ENCODE measurements at regions of chr6 and their contacts with region 1.

Region 1: GRCh38 chr6:56595490-56596122 is 47.1 kb downstream of the DST start:
- DNase-seq: peak; percentile 24
- ATAC-seq: peak; percentile 83; the same call in 1 of the 2 replicates
- H3K4me3 Mint-ChIP-seq: no peak overlapping the region
- H3K27ac Mint-ChIP-seq: peak overlapping the region; percentile 24
- H3K4me1 Mint-ChIP-seq: no peaks in the 10 kb centered on the region
- H3K27me3 Mint-ChIP-seq: no peaks in the 10 kb centered on the region
- CTCF ChIP-seq: peak; percentile 47

Region 2: DNA sequence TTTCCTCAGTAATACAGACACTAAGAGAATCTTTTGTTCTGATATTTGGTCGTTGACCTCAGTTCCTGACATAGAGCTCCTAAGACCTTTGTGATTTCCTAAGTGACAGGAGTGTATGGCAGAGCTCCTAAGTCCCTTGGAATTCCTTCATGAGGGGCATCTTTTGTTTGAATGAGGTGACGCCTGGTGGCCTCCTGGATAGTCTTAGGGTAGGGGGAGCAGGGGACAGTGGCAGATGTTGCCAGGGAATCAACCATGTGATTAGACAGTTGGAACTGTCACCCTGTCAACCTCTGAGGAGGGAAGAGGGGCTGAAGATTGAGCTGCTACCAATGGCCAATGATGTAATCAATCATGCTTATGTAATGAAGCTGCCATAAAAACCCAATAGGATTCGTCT is 19.9 kb before region 1 on chr6:
- CTCF ChIA-PET with region 1: interaction called, 15 read pairs
- POLR2A ChIA-PET with region 1: no interaction called
- DNase-seq: no peak
- ATAC-seq: no peak
- H3K4me3 Mint-ChIP-seq: no peak overlapping the region
- H3K27ac Mint-ChIP-seq: no peak overlapping the region
- H3K4me1 Mint-ChIP-seq: no peaks in the 10 kb centered on the region
- H3K27me3 Mint-ChIP-seq: no peaks in the 10 kb centered on the region
- CTCF ChIP-seq: no peak

Region 3: GRCh38 chr6:56613247-56613851 is 17.7 kb after region 1 on chr6:
- CTCF ChIA-PET with region 1: interaction called, 13 read pairs
- POLR2A ChIA-PET with region 1: no interaction called
- DNase-seq: no peak
- ATAC-seq: 0 out of 2 replicates have a peak, but pooled peaks have one; percentile 17
- H3K4me3 Mint-ChIP-seq: no peak overlapping the region
- H3K27ac Mint-ChIP-seq: no peak overlapping the region
- H3K4me1 Mint-ChIP-seq: peaks cover 26% of the 10 kb centered on the region
- H3K27me3 Mint-ChIP-seq: no peaks in the 10 kb centered on the region
- CTCF ChIP-seq: no peak

Region 4: DNA sequence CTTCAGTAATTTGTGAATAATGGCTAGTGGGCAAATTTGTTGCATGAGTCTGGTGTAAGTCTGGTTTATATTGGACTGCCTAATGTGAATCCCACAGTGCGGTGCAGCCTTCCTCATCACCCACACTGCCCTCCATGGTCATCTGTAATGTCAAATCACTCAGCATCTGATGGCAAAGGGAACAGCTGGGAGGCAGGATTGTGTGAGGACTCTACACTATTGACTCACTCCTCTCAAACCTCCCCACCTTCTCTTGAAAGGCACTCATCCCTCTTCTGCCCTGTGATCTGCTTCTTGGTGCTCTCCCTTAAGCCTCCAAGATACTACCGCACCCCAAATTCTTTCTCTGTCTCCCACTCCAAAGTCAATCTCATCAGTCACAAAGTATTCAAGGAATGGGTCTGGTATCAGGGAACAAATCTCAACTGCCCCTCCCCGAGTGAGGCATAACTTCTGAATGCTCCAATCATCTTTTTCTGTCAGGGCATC is 213.3 kb after region 1 on chr6:
- CTCF ChIA-PET with region 1: no interaction called
- POLR2A ChIA-PET with region 1: no interaction called
- DNase-seq: no peak
- ATAC-seq: peak; percentile 65
- H3K4me3 Mint-ChIP-seq: no peak overlapping the region
- H3K27ac Mint-ChIP-seq: peak overlapping the region; percentile 88
- H3K4me1 Mint-ChIP-seq: peaks cover 49% of the 10 kb centered on the region
- H3K27me3 Mint-ChIP-seq: no peaks in the 10 kb centered on the region
- CTCF ChIP-seq: no peak